ENCODE measurements at regions of chr7 and their contacts with region 1.

Region 1: DNA sequence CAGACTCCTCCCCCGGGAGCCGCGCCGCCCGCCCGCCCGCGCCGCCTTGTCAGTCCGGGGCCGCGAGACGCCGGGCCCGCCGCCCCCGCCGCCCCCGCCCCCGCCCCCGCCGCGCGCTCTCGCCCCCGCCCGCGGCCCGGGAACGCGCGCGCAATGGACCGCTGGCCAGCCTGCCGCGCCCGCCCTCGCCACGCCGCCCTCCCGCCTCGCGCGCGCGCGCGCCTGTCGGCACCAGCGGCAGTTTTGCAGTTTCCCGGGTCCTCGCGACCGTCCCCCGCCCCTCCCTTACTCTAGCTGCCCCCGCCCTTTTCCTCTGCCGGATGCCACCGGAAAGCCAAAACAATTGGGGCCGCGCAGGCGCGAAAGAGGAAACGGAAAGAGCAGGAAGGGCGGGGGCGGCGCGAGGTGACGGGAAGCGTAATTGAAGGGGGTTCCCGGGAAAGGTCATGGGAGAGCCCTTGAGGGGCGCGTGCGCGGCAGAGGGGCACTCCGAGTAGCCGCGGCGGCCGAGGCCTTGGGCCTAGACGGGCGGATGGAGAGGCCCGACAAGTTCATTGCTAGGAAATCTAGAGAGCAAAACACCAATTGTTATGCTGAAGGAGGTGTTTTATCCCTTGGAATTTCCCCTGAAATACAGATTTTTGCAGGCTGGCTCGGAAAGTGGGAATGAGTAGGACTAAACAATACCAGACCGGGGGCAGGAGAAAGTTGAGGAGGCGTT is 400 bp upstream of the KBTBD2 start:
- DNase-seq: peak; percentile 97
- H3K4me3 ChIP-seq: peak overlapping the region; percentile 78 to 100 (median 98)
- H3K27ac ChIP-seq: peak overlapping the region; percentile 99 to 100 (median 100)
- H3K4me1 ChIP-seq: peaks cover 12 to 53% (median 35%) of the 10 kb centered on the region in 4 donors
- H3K27me3 ChIP-seq: no peaks in the 10 kb centered on the region
- CTCF ChIP-seq: no peak
- EP300 ChIP-seq: peak; percentile 25
- POLR2A ChIP-seq: peak; percentile 78

Region 2: GRCh38 chr7:32204361-32205018 is 687.5 kb before region 1 on chr7:
- in situ Hi-C with region 1: no loop called
- intact Hi-C with region 1: no loop called
- DNase-seq: peak; percentile 54
- H3K4me3 ChIP-seq: peak overlapping the region in 2 of 4 donors; percentile 8 to 29
- H3K27ac ChIP-seq: no peak overlapping the region
- H3K4me1 ChIP-seq: no peaks in the 10 kb centered on the region
- H3K27me3 ChIP-seq: no peaks in the 10 kb centered on the region
- CTCF ChIP-seq: peak; percentile 49 to 78 (median 60)
- EP300 ChIP-seq: no peak
- POLR2A ChIP-seq: no peak

Region 3: DNA sequence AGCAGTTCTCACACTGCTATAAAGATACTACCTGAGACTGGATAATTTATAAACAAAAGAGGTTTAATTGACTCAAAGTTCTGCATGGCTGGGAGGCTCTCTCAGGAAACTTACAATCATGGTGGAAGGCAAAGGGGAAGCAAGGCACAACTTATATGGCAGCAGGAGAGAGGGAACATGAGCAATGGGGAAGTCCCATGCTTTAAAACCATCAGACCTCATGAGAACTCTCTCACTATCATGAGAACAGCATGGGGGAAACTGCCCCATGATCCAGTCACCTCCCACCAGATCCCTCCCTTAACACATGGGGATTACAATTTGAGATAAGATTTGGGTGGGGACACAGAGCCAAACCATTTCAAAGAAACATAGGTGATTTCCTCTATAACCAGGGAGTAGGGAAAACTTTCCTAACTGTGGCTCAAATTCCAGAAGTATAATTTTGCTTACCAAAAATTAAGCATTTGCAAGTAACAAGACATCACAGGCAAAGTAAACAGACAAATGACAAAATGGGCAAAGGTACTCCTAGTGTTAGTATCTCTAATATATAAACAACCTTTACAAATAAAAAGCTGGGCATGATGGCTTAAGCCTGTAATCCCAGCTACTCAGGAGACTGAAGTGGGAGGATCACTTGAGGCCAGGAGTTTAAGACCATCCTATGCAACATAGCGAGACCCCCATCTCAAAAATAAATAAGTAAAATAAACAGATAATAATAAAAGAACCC is 88.4 kb before region 1 on chr7:
- in situ Hi-C with region 1: no loop called
- intact Hi-C with region 1: no loop called
- DNase-seq: no peak
- H3K4me3 ChIP-seq: no peak overlapping the region
- H3K27ac ChIP-seq: no peak overlapping the region
- H3K4me1 ChIP-seq: peaks cover 0 to 4% (median 1%) of the 10 kb centered on the region in 4 donors
- H3K27me3 ChIP-seq: no peaks in the 10 kb centered on the region
- CTCF ChIP-seq: no peak
- EP300 ChIP-seq: no peak
- POLR2A ChIP-seq: no peak

Region 4: DNA sequence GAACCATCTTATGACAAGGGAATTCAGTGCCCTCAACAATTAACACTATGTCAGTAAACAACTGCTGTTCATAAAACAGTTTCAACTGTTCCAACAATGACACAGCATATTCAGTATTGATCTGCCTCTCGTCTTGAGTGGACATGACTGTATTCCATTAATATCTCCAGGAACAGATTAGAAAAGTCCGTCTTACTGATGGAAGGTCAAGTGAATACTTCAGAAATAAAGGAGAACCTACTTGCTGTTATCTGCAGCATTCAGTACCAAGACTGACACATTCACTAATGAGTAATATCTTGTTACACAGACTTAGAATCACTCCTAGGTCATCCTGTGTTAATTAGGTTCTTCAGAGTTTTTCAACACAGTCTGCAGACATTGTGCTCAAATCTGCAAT is 12.5 kb before region 1 on chr7:
- in situ Hi-C with region 1: no loop called
- intact Hi-C with region 1: no loop called
- DNase-seq: no peak
- H3K4me3 ChIP-seq: no peak overlapping the region
- H3K27ac ChIP-seq: peak overlapping the region in 1 of 4 donors; percentile 33
- H3K4me1 ChIP-seq: peaks cover 10 to 63% (median 27%) of the 10 kb centered on the region in 4 donors
- H3K27me3 ChIP-seq: no peaks in the 10 kb centered on the region
- CTCF ChIP-seq: no peak
- EP300 ChIP-seq: no peak
- POLR2A ChIP-seq: no peak

Region 5: GRCh38 chr7:32957326-32958045 is 65.5 kb after region 1 on chr7 and contains the start of gene FKBP9:
- in situ Hi-C with region 1: no loop called
- intact Hi-C with region 1: loop called (anchors 10 kb)
- DNase-seq: peak; percentile 94
- H3K4me3 ChIP-seq: peak within 1 kb of the TSS; percentile 88 to 98 (median 94)
- H3K27ac ChIP-seq: peak within 1 kb of the TSS; percentile 97 to 99 (median 98)
- H3K4me1 ChIP-seq: peaks cover 6 to 19% (median 9%) of the 10 kb centered on the region in 4 donors
- H3K27me3 ChIP-seq: no peaks in the 10 kb centered on the region
- CTCF ChIP-seq: no peak
- EP300 ChIP-seq: no peak
- POLR2A ChIP-seq: peak; percentile 70
- total RNA-seq, gene FKBP9: 124 to 191 (median 180) TPM

Region 6: GRCh38 chr7:33062782-33063443 is 171.0 kb after region 1 on chr7:
- in situ Hi-C with region 1: no loop called
- intact Hi-C with region 1: loop called (anchors 5 kb)
- DNase-seq: peak; percentile 95
- H3K4me3 ChIP-seq: peak overlapping the region; percentile 75 to 88 (median 85)
- H3K27ac ChIP-seq: peak overlapping the region; percentile 94 to 99 (median 96)
- H3K4me1 ChIP-seq: peaks cover 12 to 37% (median 17%) of the 10 kb centered on the region in 4 donors
- H3K27me3 ChIP-seq: no peaks in the 10 kb centered on the region
- CTCF ChIP-seq: no peak
- EP300 ChIP-seq: no peak
- POLR2A ChIP-seq: peak; percentile 47